Activated T-helper 2 cell treated with anti-CD3 and anti-CD28 coated beads, Interferon-gamma antibody, Interleukin-2, Interleukin-4, amounts not matched to agents 10 μg/mL and 5 μg/mL and 100 μg/mL, durations not matched to agents 14 hours and 24 hours and 36 hours (primary cell): ENCODE measurements at regions of chr11 and their contacts with region 1.

Region 1: GRCh38 chr11:124843616-124843910 is 21.7 kb upstream of the ROBO3 start:
- DNase-seq: no peak
- H3K4me3 Mint-ChIP-seq: no peak overlapping the region
- H3K27ac Mint-ChIP-seq: no peak overlapping the region
- H3K4me1 Mint-ChIP-seq: peaks cover 3% of the 10 kb centered on the region
- H3K27me3 Mint-ChIP-seq: peaks cover 94% of the 10 kb centered on the region

Region 2: GRCh38 chr11:124865921-124866583 is 22.5 kb after region 1 on chr11:
- intact Hi-C with region 1: loop called (anchors 1 kb)
- DNase-seq: peak; percentile 41
- H3K4me3 Mint-ChIP-seq: no peak overlapping the region
- H3K27ac Mint-ChIP-seq: no peak overlapping the region
- H3K4me1 Mint-ChIP-seq: peaks cover 9% of the 10 kb centered on the region
- H3K27me3 Mint-ChIP-seq: peaks cover 93% of the 10 kb centered on the region